Panc1 (cell line): ENCODE measurements at regions of chr2 and their contacts with region 1.

Region 1: DNA sequence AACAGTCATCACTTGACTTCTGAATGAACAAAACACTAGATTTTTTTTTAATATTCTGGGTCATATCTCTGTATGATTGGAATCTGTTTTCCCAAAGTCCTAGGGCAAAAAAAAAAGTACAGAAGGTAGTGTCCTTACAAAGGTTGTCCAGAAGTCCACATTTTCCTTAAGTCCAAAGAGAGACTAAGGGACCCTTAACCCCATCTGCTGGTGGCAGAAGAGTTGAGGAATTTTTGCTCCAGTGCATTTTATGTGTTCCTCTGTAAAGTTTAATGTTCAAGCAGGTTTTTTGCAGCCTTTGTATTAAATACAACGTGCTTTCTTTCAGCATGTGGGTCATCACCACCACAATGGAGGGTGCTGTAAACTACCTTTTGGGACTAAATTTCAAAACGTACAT is 215.9 kb downstream of the SP3 start:
- DNase-seq: peak; percentile 15
- ATAC-seq: no peak
- H3K4me3 ChIP-seq: no peak overlapping the region
- H3K27ac ChIP-seq: no peak overlapping the region
- H3K4me1 ChIP-seq: peaks cover 4% of the 10 kb centered on the region; the same call in 1 of the 2 replicates
- H3K27me3 ChIP-seq: no peaks in the 10 kb centered on the region
- CTCF ChIP-seq: peak; percentile 53; the same call in 1 of the 2 replicates

Region 2: DNA sequence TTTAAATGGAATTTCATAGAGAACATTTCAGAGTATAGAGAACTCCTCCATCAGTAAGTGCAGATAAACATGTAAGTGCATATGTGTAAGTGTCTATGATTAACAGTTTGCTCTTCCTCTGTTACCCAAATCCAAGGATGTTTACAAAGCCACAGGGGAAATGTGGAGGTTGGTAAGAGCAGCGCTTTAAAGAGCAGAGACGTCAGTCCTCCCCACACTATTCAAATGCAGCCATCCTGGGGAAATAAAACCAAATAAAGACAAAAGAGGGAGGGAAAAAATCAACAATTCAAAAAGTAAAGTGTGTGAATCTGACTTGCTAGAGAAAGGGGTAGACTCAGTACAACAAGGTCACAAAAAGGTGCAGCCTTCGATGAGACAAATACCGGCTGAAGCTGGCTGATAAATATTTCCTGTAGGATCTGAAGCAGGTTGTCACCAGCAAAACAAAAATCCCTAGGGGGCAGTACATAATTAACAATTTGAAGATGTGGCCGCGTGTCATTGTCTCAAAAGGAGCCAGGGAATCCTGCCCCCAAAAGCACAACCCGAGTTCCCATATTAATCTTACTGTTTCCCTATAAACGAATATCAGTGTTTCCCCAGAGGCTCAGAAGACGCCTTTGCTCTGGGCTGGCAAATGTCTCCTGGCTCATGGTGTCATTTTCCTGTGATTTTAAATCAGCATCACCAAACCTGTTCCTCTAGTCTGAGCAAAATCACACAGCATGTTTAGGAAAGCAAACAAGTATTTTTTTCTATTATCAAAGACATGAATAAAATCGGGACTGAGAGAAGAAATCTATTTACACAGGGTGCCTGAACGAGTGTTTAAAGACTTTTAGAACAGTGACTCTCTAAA is 178.1 kb before region 1 on chr2:
- CTCF ChIA-PET with region 1: no interaction called
- POLR2A ChIA-PET with region 1: no interaction called
- in situ Hi-C with region 1: no loop called
- intact Hi-C with region 1: loop called (anchors 5 kb)
- DNase-seq: peak; percentile 30
- ATAC-seq: peak; percentile 89
- H3K4me3 ChIP-seq: peak overlapping the region in 1 of 2 experiments; percentile 36; a peak in 2 of 4 replicates
- H3K27ac ChIP-seq: peak overlapping the region; percentile 74
- H3K4me1 ChIP-seq: peaks cover 13% of the 10 kb centered on the region
- H3K27me3 ChIP-seq: no peaks in the 10 kb centered on the region
- CTCF ChIP-seq: peak; percentile 73

Region 3: DNA sequence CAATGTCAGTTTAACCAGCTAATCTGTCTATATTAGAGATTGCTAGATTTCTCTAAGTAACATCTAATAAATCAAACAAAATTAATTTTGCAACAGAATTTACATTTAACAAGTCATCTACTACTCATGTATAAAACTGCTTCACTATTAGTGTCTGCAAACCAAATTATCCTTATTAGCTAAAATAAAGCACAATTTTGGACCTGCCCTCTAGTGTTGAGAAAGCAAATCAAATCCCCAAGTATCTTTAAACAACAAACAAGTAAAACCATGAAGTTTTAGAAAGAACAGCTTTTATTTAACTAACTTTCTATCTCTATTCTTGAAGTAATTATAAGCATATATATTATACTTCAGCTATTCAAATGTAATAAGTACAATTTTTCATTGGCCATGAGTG is 329.0 kb after region 1 on chr2:
- CTCF ChIA-PET with region 1: no interaction called
- POLR2A ChIA-PET with region 1: interaction called, 14 read pairs
- in situ Hi-C with region 1: no loop called
- intact Hi-C with region 1: no loop called
- DNase-seq: no peak
- ATAC-seq: no peak
- H3K4me3 ChIP-seq: no peak overlapping the region
- H3K27ac ChIP-seq: no peak overlapping the region
- H3K4me1 ChIP-seq: no peaks in the 10 kb centered on the region
- H3K27me3 ChIP-seq: no peaks in the 10 kb centered on the region
- CTCF ChIP-seq: peak; percentile 24; the same call in 1 of the 2 replicates